ENCODE measurements at regions of chr1 and their contacts with region 1.

Region 1: DNA sequence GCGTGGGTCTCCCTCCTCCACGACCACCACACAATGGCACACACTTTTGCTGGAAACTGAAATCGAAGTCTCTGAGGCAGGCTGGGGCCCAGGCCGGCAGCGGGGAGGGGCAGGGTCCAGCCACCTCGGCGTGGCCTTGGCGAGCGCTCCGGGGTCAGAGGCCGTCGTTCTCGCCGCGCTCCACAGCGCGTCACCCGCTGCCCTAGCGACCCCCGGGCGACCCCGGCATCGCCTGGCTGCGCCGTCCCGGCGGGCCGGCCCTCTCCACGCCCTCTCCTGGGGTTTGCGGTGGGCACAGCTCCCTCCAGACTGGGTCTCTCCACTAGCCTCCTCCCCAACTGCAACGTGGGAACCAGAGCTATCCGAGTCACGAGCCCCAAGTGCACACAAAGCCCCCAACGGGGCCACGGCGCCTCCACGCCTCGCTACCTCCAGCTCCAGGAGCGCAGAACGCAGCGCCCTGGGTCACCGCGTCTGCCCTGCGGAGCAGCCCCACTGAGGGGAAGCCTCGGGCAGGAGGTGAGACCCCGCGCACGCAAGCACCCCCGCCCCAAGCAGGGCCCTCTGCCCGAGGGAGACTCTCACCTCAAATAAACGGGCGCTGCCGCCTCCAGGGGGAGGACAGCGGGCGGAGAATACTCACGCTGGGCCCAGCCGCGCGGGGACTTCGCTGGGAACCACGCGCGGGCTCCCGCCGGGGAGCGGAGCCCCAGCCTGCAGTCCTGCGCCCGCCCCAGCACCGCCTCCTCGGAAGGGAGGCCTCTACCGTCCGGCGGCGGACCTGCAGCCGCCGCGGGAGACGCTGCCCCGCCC is 134.0 kb upstream of the BARHL2 start:
- DNase-seq: peak; percentile 14 to 87
- H3K4me3 ChIP-seq: peak overlapping the region; percentile 87 to 96
- H3K27ac ChIP-seq: no peak overlapping the region
- H3K4me1 ChIP-seq: peaks cover 2% of the 10 kb centered on the region in 2 donors
- H3K27me3 ChIP-seq: no peaks in the 10 kb centered on the region
- CTCF ChIP-seq: peak; percentile 51 to 89 (median 80)

Region 2: GRCh38 chr1:90717665-90718410 is 133.3 kb before region 1 on chr1:
- intact Hi-C with region 1: loop called (anchors 5 kb)
- DNase-seq: no peak
- H3K4me3 ChIP-seq: peak overlapping the region; percentile 49 to 59
- H3K27ac ChIP-seq: no peak overlapping the region
- H3K4me1 ChIP-seq: peaks cover 5 to 18% of the 10 kb centered on the region in 2 donors
- H3K27me3 ChIP-seq: peaks cover 38% of the 10 kb centered on the region
- CTCF ChIP-seq: no peak

Region 3: DNA sequence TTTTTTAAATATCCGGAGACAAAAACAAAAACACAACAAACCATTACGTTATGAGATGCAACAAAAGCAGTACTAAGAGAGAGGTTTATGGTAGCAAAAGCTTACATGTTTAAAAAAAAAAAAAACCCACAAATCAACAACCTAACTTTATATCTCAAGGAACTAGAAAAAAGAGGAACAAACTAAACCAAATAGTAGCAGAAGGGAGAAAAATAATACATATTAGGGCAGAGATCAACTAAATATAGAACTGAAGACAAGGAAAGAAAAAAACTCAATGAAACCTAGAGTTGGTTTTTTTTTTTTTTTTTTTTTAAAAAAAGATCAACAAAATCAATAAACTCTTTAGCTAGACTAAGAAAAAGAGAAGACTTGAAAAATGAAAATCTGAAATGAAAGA is 135.8 kb after region 1 on chr1:
- intact Hi-C with region 1: no loop called
- DNase-seq: no peak
- H3K4me3 ChIP-seq: no peak overlapping the region
- H3K27ac ChIP-seq: no peak overlapping the region
- H3K4me1 ChIP-seq: no peaks in the 10 kb centered on the region
- H3K27me3 ChIP-seq: no peaks in the 10 kb centered on the region
- CTCF ChIP-seq: no peak

Region 4: GRCh38 chr1:91021686-91022517 is 170.8 kb after region 1 on chr1 and contains the start of gene ZNF644:
- intact Hi-C with region 1: loop called (anchors 2 kb)
- DNase-seq: peak; percentile 78 to 98
- H3K4me3 ChIP-seq: peak within 1 kb of the TSS; percentile 72 to 84
- H3K27ac ChIP-seq: peak within 1 kb of the TSS; percentile 96 to 100
- H3K4me1 ChIP-seq: peaks cover 4 to 13% of the 10 kb centered on the region in 2 donors
- H3K27me3 ChIP-seq: no peaks in the 10 kb centered on the region
- CTCF ChIP-seq: no peak
- total RNA-seq, gene ZNF644: 17.1 TPM